ENCODE measurements at regions of chr2 and their contacts with region 1.

Region 1: DNA sequence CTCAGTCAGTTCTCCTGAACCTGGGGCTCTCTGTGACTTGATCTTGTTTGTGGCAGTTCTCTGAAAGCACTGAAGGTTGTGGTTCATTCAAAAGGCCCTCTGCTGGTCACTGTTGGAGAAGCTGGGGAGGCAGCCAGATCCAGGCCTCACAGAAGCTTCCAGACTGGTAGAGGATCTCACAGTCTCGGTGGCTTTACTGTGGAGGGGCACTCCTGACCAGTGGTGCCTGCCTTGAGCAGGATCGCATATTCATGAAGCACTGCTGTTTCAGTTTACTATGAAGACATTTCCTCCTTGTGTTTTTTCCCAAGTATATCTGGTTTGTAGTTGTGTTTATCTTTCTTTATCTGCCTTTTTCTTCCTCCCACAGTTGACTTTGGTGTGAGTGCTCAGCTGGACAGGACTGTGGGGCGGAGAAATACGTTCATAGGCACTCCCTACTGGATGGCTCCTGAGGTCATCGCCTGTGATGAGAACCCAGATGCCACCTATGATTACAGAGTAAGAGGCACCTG is 133.9 kb downstream of the MAP4K4 start:
- DNase-seq: peak; percentile 88
- H3K4me3 Mint-ChIP-seq: peak overlapping the region; percentile 50
- H3K27ac Mint-ChIP-seq: peak overlapping the region; percentile 91
- H3K4me1 Mint-ChIP-seq: peaks cover 58% of the 10 kb centered on the region
- H3K27me3 Mint-ChIP-seq: no peaks in the 10 kb centered on the region

Region 2: DNA sequence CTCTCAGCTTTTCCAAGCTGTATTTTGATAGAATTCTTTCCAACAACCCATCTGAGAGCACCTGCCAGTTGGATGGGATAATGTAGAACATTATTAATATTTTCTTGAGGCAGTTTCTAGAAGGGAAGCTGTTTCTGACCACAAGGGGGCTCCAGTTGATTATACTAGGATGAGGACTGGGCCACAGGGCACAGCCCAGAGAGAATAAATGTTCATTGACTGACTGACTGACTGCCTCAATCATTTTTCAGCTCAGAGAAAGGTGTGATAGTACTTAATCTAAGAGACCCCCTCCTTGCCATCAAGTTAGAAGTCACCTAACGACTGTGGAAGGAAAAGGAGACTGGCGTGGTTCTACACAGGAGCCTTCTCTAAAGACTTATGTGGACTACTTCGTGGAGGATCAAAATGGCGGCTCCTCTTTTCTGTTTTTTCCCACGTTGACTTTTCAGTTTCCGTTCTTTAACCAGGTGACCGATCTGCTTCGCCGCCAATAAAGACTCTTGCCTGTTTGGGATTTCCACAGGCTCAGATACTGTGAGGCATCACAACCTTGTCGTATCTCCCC is 412.2 kb before region 1 on chr2:
- intact Hi-C with region 1: loop called (anchors 1 kb)
- DNase-seq: peak; percentile 89
- H3K4me3 Mint-ChIP-seq: no peak overlapping the region
- H3K27ac Mint-ChIP-seq: no peak overlapping the region
- H3K4me1 Mint-ChIP-seq: no peaks in the 10 kb centered on the region
- H3K27me3 Mint-ChIP-seq: no peaks in the 10 kb centered on the region

Region 3: GRCh38 chr2:101655702-101656422 is 175.5 kb before region 1 on chr2:
- intact Hi-C with region 1: loop called (anchors 5 kb)
- DNase-seq: no peak
- H3K4me3 Mint-ChIP-seq: no peak overlapping the region
- H3K27ac Mint-ChIP-seq: no peak overlapping the region
- H3K4me1 Mint-ChIP-seq: peaks cover 21% of the 10 kb centered on the region
- H3K27me3 Mint-ChIP-seq: no peaks in the 10 kb centered on the region

Region 4: GRCh38 chr2:101717071-101717845 is 114.2 kb before region 1 on chr2:
- intact Hi-C with region 1: loop called (anchors 5 kb)
- DNase-seq: peak; percentile 81
- H3K4me3 Mint-ChIP-seq: peak overlapping the region; percentile 31
- H3K27ac Mint-ChIP-seq: peak overlapping the region; percentile 90
- H3K4me1 Mint-ChIP-seq: peaks cover 58% of the 10 kb centered on the region
- H3K27me3 Mint-ChIP-seq: no peaks in the 10 kb centered on the region